CD4-positive, alpha-beta T cell (primary cell): ENCODE measurements at regions of chr4 and their contacts with region 1.

Region 1: GRCh38 chr4:39032218-39033085 is at the start of gene TMEM156:
- DNase-seq: peak in 6 of 14 experiments; percentile 13 to 89 (median 61)
- ATAC-seq: peak; percentile 92
- H3K4me3 ChIP-seq: peak within 1 kb of the TSS; percentile 62
- H3K4me3 Mint-ChIP-seq: peak within 1 kb of the TSS; percentile 84
- H3K27ac ChIP-seq: peak within 1 kb of the TSS; percentile 62 to 66
- H3K27ac Mint-ChIP-seq: peak within 1 kb of the TSS; percentile 99
- H3K4me1 ChIP-seq: peaks cover 23% of the 10 kb centered on the region
- H3K4me1 Mint-ChIP-seq: peaks cover 41% of the 10 kb centered on the region
- H3K27me3 ChIP-seq: no peaks in the 10 kb centered on the region
- H3K27me3 Mint-ChIP-seq: no peaks in the 10 kb centered on the region
- CTCF ChIP-seq: no peak
- total RNA-seq, gene TMEM156: 18.4 TPM

Region 2: DNA sequence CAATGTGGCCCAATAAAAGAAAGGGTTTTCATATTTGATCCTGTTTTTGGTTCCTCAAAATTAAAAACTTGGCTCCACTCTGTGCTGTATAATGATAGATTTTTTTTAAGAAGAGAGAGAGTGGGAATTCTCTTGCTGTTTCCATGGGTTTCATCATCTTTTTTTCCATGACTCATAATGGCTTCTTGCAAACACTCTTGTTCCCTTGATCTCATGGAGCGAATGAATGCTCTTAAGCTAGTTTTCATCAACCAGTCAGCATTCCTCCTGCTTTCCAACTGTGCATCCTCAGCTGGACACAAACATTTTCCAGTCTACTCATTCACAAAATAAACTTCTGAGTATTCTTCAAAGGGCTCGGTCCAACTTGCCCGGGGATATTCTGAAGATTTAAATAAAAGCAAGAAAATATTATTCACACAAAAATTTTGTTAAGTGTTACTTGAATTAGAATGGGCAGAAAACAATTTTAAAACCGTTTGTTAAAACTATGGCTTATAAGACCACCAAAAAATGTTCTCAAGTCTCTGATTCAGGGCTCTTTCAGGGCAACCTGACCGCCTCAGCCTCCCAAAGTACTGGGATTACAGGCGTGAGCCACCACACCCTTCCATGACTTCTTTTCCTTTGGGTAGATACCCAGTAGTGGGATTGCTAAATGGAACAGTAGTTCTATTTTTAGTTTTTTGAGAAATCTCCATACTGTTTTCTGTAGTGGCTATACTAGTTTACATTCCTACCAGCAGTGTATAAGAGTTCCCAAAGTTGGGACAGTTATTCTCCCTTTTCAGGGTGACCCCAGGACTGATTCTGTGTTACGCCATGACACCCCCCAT is 65.0 kb before region 1 on chr4:
- CTCF ChIA-PET with region 1: no interaction called
- POLR2A ChIA-PET with region 1: no interaction called
- intact Hi-C with region 1: no loop called
- DNase-seq: no peak
- ATAC-seq: no peak
- H3K4me3 ChIP-seq: no peak overlapping the region
- H3K4me3 Mint-ChIP-seq: no peak overlapping the region
- H3K27ac ChIP-seq: no peak overlapping the region
- H3K27ac Mint-ChIP-seq: no peak overlapping the region
- H3K4me1 ChIP-seq: no peaks in the 10 kb centered on the region
- H3K4me1 Mint-ChIP-seq: peaks cover 7% of the 10 kb centered on the region
- H3K27me3 ChIP-seq: no peaks in the 10 kb centered on the region
- H3K27me3 Mint-ChIP-seq: no peaks in the 10 kb centered on the region
- CTCF ChIP-seq: no peak

Region 3: GRCh38 chr4:38985410-38986100 is 46.9 kb before region 1 on chr4:
- CTCF ChIA-PET with region 1: interaction called, 4 read pairs
- POLR2A ChIA-PET with region 1: interaction called, 3 read pairs
- intact Hi-C with region 1: loop called in 1 of 2 experiments (anchors 5 kb)
- DNase-seq: peak in 4 of 14 experiments; percentile 14 to 28 (median 20)
- ATAC-seq: peak; percentile 49
- H3K4me3 ChIP-seq: peak overlapping the region; percentile 17
- H3K4me3 Mint-ChIP-seq: peak overlapping the region; percentile 44
- H3K27ac ChIP-seq: peak overlapping the region in 1 of 2 donors; percentile 26
- H3K27ac Mint-ChIP-seq: peak overlapping the region; percentile 62
- H3K4me1 ChIP-seq: peaks cover 11% of the 10 kb centered on the region
- H3K4me1 Mint-ChIP-seq: peaks cover 49% of the 10 kb centered on the region
- H3K27me3 ChIP-seq: no peaks in the 10 kb centered on the region
- H3K27me3 Mint-ChIP-seq: no peaks in the 10 kb centered on the region
- CTCF ChIP-seq: no peak